ENCODE measurements at regions of chr5 and their contacts with region 1.

Region 1: GRCh38 chr5:170092455-170093101 is 13.1 kb upstream of the FOXI1 start:
- DNase-seq: no peak
- ATAC-seq: no peak
- H3K4me3 Mint-ChIP-seq: no peak overlapping the region
- H3K27ac Mint-ChIP-seq: no peak overlapping the region
- H3K4me1 Mint-ChIP-seq: peaks cover 2% of the 10 kb centered on the region
- H3K27me3 Mint-ChIP-seq: no peaks in the 10 kb centered on the region; the same call in 1 of the 2 replicates
- CTCF ChIP-seq: no peak

Region 2: GRCh38 chr5:168136340-168136739 is 1956.2 kb before region 1 on chr5:
- CTCF ChIA-PET with region 1: no interaction called
- POLR2A ChIA-PET with region 1: interaction called, 10 read pairs
- DNase-seq: no peak
- ATAC-seq: no peak
- H3K4me3 Mint-ChIP-seq: no peak overlapping the region
- H3K27ac Mint-ChIP-seq: no peak overlapping the region
- H3K4me1 Mint-ChIP-seq: peaks cover 15% of the 10 kb centered on the region
- H3K27me3 Mint-ChIP-seq: no peaks in the 10 kb centered on the region
- CTCF ChIP-seq: no peak

Region 3: GRCh38 chr5:170056561-170057267 is 35.9 kb before region 1 on chr5:
- CTCF ChIA-PET with region 1: no interaction called
- POLR2A ChIA-PET with region 1: no interaction called
- DNase-seq: no peak
- ATAC-seq: no peak
- H3K4me3 Mint-ChIP-seq: no peak overlapping the region
- H3K27ac Mint-ChIP-seq: no peak overlapping the region
- H3K4me1 Mint-ChIP-seq: no peaks in the 10 kb centered on the region
- H3K27me3 Mint-ChIP-seq: no peaks in the 10 kb centered on the region; the same call in 1 of the 2 replicates
- CTCF ChIP-seq: no peak